Naive thymus-derived CD4-positive, alpha-beta T cell (primary cell): ENCODE measurements at regions of chr5 and their contacts with region 1.

Region 1: GRCh38 chr5:132866342-132867045 is at the starts of genes GDF9 and UQCRQ:
- DNase-seq: peak; percentile 72 to 97 (median 93)
- ATAC-seq: peak; percentile 99
- H3K4me3 ChIP-seq: peak within 1 kb of the TSS; percentile 98
- H3K4me3 Mint-ChIP-seq: peak within 1 kb of the TSS; percentile 98 to 100 (median 100)
- H3K27ac ChIP-seq: peak within 1 kb of the TSS; percentile 96
- H3K27ac Mint-ChIP-seq: peak within 1 kb of the TSS; percentile 97 to 100 (median 100)
- H3K4me1 ChIP-seq: peaks cover 7 to 12% of the 10 kb centered on the region in 2 donors
- H3K4me1 Mint-ChIP-seq: peaks cover 11 to 36% (median 27%) of the 10 kb centered on the region in 7 donors
- H3K27me3 ChIP-seq: no peaks in the 10 kb centered on the region
- H3K27me3 Mint-ChIP-seq: peaks cover 0 to 8% (median 0%) of the 10 kb centered on the region in 5 donors
- total RNA-seq, gene GDF9: 0.48 to 2.0 (median 1.6) TPM
- total RNA-seq, gene UQCRQ: 101 to 338 (median 110) TPM

Region 2: DNA sequence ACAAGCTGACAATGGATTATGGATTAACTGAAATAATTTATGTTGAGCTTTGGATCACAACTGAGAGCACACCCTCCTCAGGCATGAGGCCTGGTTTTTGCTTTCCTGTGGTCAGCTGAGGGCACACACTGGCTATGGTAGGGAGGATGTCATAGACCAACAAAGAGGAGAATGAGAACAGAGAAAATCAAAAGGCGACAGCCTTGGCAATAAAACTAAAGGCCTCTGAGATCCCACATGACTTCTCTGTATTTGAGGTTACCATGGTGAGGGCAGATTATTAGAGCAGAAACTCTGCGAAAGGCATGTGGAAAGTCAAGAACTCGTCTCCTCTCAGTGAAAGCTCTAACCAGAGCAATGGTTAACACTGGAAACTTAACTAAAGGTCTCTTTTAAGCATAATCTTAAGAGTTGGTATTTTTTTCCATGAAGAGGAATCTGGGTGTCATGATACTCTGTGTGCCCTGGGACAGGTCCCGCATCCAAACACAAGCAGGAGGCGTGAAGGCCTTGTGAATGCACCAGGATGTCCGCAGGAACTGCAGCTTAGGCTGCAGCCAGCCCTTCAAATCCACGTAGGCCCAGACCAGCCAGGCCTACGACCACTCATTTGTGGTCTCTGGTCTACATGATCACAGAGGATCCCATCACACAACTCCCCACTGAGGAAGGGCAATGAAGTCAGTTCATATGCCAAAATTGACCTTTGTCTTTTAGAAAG is 908.6 kb before region 1 on chr5:
- CTCF ChIA-PET with region 1: no interaction called
- POLR2A ChIA-PET with region 1: no interaction called
- intact Hi-C with region 1: no loop called
- DNase-seq: no peak
- ATAC-seq: no peak
- H3K4me3 ChIP-seq: no peak overlapping the region
- H3K4me3 Mint-ChIP-seq: no peak overlapping the region
- H3K27ac ChIP-seq: no peak overlapping the region
- H3K27ac Mint-ChIP-seq: peak overlapping the region in 1 of 9 donors; percentile 4
- H3K4me1 ChIP-seq: no peaks in the 10 kb centered on the region
- H3K4me1 Mint-ChIP-seq: peaks cover 0 to 8% (median 0%) of the 10 kb centered on the region in 7 donors
- H3K27me3 ChIP-seq: no peaks in the 10 kb centered on the region
- H3K27me3 Mint-ChIP-seq: peaks cover 0 to 6% (median 0%) of the 10 kb centered on the region in 5 donors

Region 3: DNA sequence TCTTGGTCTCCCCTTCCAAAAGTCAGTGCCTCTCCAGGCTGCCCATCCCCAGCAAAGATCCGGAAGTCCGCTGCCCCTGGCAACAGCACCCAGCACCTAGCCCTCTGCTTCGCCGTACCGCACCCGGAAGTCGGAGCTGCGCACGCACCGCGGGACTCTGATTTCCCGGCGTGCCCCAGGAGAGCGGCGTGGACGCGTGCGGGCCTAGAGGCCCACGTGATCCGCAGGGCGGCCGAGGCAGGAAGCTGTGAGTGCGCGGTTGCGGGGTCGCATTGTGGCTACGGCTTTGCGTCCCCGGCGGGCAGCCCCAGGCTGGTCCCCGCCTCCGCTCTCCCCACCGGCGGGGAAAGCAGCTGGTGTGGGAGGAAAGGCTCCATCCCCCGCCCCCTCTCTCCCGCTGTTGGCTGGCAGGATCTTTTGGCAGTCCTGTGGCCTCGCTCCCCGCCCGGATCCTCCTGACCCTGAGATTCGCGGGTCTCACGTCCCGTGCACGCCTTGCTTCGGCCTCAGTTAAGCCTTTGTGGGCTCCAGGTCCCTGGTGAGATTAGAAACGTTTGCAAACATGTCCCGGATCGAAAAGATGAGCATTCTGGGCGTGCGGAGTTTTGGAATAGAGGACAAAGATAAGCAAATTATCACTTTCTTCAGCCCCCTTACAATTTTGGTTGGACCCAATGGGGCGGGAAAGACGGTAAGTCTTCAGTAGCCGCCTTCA is 309.6 kb before region 1 on chr5 and contains the start of gene RAD50:
- CTCF ChIA-PET with region 1: no interaction called
- POLR2A ChIA-PET with region 1: no interaction called
- intact Hi-C with region 1: loop called (anchors 1 to 5 kb)
- DNase-seq: peak; percentile 81 to 92 (median 90)
- ATAC-seq: peak; percentile 97
- H3K4me3 ChIP-seq: peak within 1 kb of the TSS; percentile 78
- H3K4me3 Mint-ChIP-seq: peak within 1 kb of the TSS; percentile 90 to 99 (median 96)
- H3K27ac ChIP-seq: peak within 1 kb of the TSS; percentile 76
- H3K27ac Mint-ChIP-seq: peak within 1 kb of the TSS; percentile 90 to 98 (median 97)
- H3K4me1 ChIP-seq: peaks cover 5 to 14% of the 10 kb centered on the region in 2 donors
- H3K4me1 Mint-ChIP-seq: peaks cover 10 to 37% (median 29%) of the 10 kb centered on the region in 7 donors
- H3K27me3 ChIP-seq: no peaks in the 10 kb centered on the region
- H3K27me3 Mint-ChIP-seq: no peaks in the 10 kb centered on the region
- total RNA-seq, gene RAD50: 18.0 to 35.4 (median 32.2) TPM

Region 4: GRCh38 chr5:132718544-132719312 is 147.8 kb before region 1 on chr5:
- CTCF ChIA-PET with region 1: no interaction called
- POLR2A ChIA-PET with region 1: no interaction called
- intact Hi-C with region 1: no loop called
- DNase-seq: no peak
- ATAC-seq: no peak
- H3K4me3 ChIP-seq: no peak overlapping the region
- H3K4me3 Mint-ChIP-seq: no peak overlapping the region
- H3K27ac ChIP-seq: no peak overlapping the region
- H3K27ac Mint-ChIP-seq: no peak overlapping the region
- H3K4me1 ChIP-seq: no peaks in the 10 kb centered on the region
- H3K4me1 Mint-ChIP-seq: peaks cover 0 to 15% (median 9%) of the 10 kb centered on the region in 7 donors
- H3K27me3 ChIP-seq: no peaks in the 10 kb centered on the region
- H3K27me3 Mint-ChIP-seq: no peaks in the 10 kb centered on the region

Region 5: DNA sequence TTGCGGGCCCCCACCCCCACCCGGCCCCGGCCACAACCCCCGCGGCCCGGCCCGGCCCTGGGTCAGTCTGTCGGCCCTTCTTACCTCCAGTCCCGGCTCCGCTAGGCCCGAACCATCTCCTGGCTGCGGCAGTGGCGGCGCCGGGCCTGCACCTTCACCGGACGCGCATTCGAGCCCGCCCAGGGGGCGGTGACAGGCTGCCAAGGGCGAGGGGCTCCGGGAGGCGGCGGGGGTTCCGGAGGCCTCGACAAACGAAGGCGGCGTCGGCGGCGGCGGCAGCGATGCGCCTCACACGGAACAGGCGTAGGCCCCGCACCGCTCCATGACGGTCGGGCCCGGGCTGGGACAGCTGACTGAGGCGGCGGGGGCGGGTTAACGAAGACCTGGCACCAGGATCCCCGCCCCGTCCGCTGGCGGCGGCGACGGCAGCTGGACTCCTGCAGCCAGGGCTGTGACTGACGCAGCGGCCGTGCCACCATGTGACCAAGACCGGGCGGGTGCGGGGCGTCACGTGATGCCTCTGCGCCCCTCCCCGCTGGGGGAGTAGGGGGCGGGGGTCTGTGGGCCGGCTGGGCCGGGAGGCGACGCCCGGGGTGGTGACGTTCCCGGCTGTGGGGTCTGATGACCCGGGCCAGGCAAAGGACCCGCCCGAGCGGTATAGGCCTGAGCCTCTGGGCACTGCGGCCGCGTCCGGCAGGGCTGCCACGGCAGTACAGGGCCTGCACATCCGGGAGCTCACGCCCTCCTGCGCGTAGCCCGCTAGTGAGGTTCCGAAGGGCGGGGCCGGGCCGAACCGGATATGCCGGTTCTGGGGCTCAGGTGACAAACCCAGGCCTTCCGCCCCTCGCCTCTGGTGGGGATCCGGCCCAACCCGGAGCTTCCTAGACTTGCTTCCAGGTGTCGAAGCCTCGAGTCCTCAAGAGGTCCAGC is 96.9 kb after region 1 on chr5 and contains the start of gene AFF4:
- CTCF ChIA-PET with region 1: no interaction called
- POLR2A ChIA-PET with region 1: interaction called, 18 read pairs
- intact Hi-C with region 1: loop called (anchors 1 kb)
- DNase-seq: peak; percentile 81 to 90 (median 85)
- ATAC-seq: peak; percentile 92
- H3K4me3 ChIP-seq: peak within 1 kb of the TSS; percentile 65
- H3K4me3 Mint-ChIP-seq: peak within 1 kb of the TSS; percentile 90 to 100 (median 98)
- H3K27ac ChIP-seq: peak within 1 kb of the TSS; percentile 94
- H3K27ac Mint-ChIP-seq: peak within 1 kb of the TSS; percentile 96 to 100 (median 98)
- H3K4me1 ChIP-seq: peaks cover 10 to 22% of the 10 kb centered on the region in 2 donors
- H3K4me1 Mint-ChIP-seq: peaks cover 26 to 52% (median 38%) of the 10 kb centered on the region in 7 donors
- H3K27me3 ChIP-seq: no peaks in the 10 kb centered on the region
- H3K27me3 Mint-ChIP-seq: no peaks in the 10 kb centered on the region
- total RNA-seq, gene AFF4: 39.7 to 82.3 (median 69.0) TPM

Region 6: DNA sequence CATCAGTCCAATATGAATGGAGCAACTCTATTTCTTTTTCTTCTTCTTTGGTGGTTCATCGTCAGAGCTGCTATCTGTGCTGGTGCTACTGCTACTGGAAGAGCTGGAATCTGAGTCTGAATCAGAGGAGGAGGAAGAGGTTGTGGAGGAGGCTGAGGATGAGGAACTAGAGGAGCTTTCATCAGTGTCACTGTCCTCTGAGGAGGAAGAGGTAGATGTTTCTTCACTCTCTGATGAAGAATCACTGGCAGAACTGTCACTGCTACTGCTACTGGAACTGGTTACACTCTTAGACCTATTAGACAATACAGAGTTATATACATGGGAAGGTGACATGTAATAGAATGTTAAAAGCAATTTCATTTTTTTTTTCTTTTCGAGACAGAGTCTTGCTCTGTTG is 132.1 kb after region 1 on chr5:
- CTCF ChIA-PET with region 1: no interaction called
- POLR2A ChIA-PET with region 1: no interaction called
- intact Hi-C with region 1: no loop called
- DNase-seq: no peak
- ATAC-seq: peak; percentile 20
- H3K4me3 ChIP-seq: no peak overlapping the region
- H3K4me3 Mint-ChIP-seq: no peak overlapping the region
- H3K27ac ChIP-seq: no peak overlapping the region
- H3K27ac Mint-ChIP-seq: peak overlapping the region in 2 of 9 donors; percentile 35 to 40
- H3K4me1 ChIP-seq: no peaks in the 10 kb centered on the region
- H3K4me1 Mint-ChIP-seq: peaks cover 0 to 6% (median 0%) of the 10 kb centered on the region in 7 donors
- H3K27me3 ChIP-seq: no peaks in the 10 kb centered on the region
- H3K27me3 Mint-ChIP-seq: no peaks in the 10 kb centered on the region

Region 7: DNA sequence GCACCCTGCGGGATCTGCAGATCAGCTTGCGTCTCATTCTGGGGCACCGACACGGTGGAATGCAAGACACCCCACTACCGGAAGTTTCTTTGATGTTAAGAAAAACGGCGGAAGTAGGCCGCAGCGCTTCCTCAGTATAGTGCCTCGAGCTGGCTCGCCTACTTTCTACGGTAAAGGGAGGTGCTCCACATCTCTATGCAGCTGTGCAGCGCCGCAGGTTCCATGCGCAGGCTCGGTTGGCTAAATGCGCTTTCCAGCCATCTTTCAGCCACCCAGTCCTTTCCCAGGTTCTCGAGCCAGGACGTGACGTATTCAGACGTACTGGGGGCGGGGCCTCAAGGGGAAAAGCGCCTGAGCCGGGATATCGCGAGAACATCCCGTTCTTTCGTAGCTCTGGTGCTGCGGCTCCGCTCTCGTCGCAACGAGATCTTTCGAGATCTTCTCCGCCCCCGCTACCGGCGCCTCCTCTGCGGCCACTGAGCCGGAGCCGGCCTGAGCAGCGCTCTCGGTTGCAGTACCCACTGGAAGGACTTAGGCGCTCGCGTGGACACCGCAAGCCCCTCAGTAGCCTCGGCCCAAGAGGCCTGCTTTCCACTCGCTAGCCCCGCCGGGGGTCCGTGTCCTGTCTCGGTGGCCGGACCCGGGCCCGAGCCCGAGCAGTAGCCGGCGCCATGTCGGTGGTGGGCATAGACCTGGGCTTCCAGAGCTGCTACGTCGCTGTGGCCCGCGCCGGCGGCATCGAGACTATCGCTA is 185.3 kb after region 1 on chr5 and contains the start of gene HSPA4:
- CTCF ChIA-PET with region 1: no interaction called
- POLR2A ChIA-PET with region 1: interaction called, 19 read pairs
- intact Hi-C with region 1: loop called (anchors 1 kb)
- DNase-seq: peak; percentile 86 to 99 (median 98)
- ATAC-seq: peak; percentile 91
- H3K4me3 ChIP-seq: peak within 1 kb of the TSS; percentile 92
- H3K4me3 Mint-ChIP-seq: peak within 1 kb of the TSS; percentile 91 to 99 (median 98)
- H3K27ac ChIP-seq: peak within 1 kb of the TSS; percentile 98
- H3K27ac Mint-ChIP-seq: peak within 1 kb of the TSS; percentile 99 to 100 (median 100)
- H3K4me1 ChIP-seq: peaks cover 17 to 19% of the 10 kb centered on the region in 2 donors
- H3K4me1 Mint-ChIP-seq: peaks cover 31 to 70% (median 52%) of the 10 kb centered on the region in 7 donors
- H3K27me3 ChIP-seq: no peaks in the 10 kb centered on the region
- H3K27me3 Mint-ChIP-seq: no peaks in the 10 kb centered on the region
- total RNA-seq, gene HSPA4: 42.1 to 103 (median 50.0) TPM

Region 8: GRCh38 chr5:133086366-133086875 is 219.9 kb after region 1 on chr5:
- CTCF ChIA-PET with region 1: no interaction called
- POLR2A ChIA-PET with region 1: no interaction called
- intact Hi-C with region 1: no loop called
- DNase-seq: no peak
- ATAC-seq: no peak
- H3K4me3 ChIP-seq: no peak overlapping the region
- H3K4me3 Mint-ChIP-seq: no peak overlapping the region
- H3K27ac ChIP-seq: no peak overlapping the region
- H3K27ac Mint-ChIP-seq: peak overlapping the region in 2 of 9 donors; percentile 22 to 33
- H3K4me1 ChIP-seq: no peaks in the 10 kb centered on the region
- H3K4me1 Mint-ChIP-seq: peaks cover 0 to 11% (median 5%) of the 10 kb centered on the region in 7 donors
- H3K27me3 ChIP-seq: no peaks in the 10 kb centered on the region
- H3K27me3 Mint-ChIP-seq: no peaks in the 10 kb centered on the region